CD8-positive, alpha-beta T cell (primary cell): ENCODE measurements at regions of chr12 and their contacts with region 1.

Region 1: DNA sequence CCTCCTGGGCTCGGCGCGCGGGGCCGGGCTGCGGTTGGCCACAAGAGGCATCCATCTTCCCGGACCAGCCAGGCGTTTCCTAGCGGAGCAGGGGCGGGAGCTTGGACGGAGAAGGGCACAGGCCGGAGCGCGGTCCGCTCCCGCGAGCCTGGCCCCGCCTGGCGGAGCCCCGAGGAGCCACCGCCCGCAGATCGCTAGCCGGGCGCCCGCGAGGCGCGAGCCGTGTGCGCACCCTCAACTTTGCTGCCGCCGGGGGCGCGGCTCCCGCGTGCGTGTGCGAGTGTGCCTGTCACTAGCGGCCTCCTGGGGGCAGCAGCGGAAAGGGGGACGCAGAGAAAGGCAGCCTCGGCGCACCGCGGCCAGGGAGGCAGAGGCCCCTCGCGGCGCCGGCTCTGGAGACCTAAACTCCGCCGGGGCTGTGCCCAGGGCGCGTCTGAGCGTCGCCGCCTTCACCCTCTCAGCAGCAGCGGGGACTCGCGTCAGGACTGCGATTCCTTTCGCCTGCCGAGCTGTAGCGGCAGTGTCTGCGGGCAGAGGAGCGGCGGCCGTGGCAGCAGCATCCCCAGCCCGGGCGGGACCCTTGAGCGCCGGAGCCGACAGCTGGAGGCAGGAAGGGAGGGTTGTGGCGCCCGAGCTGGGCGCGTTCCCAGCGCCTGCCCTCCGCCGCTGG is 644 bp upstream of the SRGAP1 start:
- DNase-seq: peak; percentile 61 to 91 (median 78)
- ATAC-seq: peak; percentile 94
- H3K4me3 ChIP-seq: peak overlapping the region; percentile 49 to 69
- H3K4me3 Mint-ChIP-seq: peak overlapping the region; percentile 76
- H3K27ac ChIP-seq: no peak overlapping the region
- H3K27ac Mint-ChIP-seq: no peak overlapping the region
- H3K4me1 ChIP-seq: peaks cover 7% of the 10 kb centered on the region
- H3K4me1 Mint-ChIP-seq: peaks cover 10% of the 10 kb centered on the region
- H3K27me3 ChIP-seq: peaks cover 0 to 13% of the 10 kb centered on the region in 2 experiments
- H3K27me3 Mint-ChIP-seq: peaks cover 32% of the 10 kb centered on the region
- CTCF ChIP-seq: peak; percentile 78

Region 2: GRCh38 chr12:63766498-63766897 is 77.4 kb before region 1 on chr12:
- CTCF ChIA-PET with region 1: no interaction called
- POLR2A ChIA-PET with region 1: no interaction called
- intact Hi-C with region 1: no loop called
- DNase-seq: no peak
- ATAC-seq: no peak
- H3K4me3 ChIP-seq: no peak overlapping the region
- H3K4me3 Mint-ChIP-seq: no peak overlapping the region
- H3K27ac ChIP-seq: no peak overlapping the region
- H3K27ac Mint-ChIP-seq: no peak overlapping the region
- H3K4me1 ChIP-seq: no peaks in the 10 kb centered on the region
- H3K4me1 Mint-ChIP-seq: no peaks in the 10 kb centered on the region
- H3K27me3 ChIP-seq: peaks cover 0 to 3% of the 10 kb centered on the region in 2 experiments
- H3K27me3 Mint-ChIP-seq: peaks cover 21% of the 10 kb centered on the region
- CTCF ChIP-seq: no peak

Region 3: GRCh38 chr12:63882844-63883243 is 39.0 kb after region 1 on chr12:
- CTCF ChIA-PET with region 1: no interaction called
- POLR2A ChIA-PET with region 1: no interaction called
- intact Hi-C with region 1: no loop called
- DNase-seq: no peak
- ATAC-seq: no peak
- H3K4me3 ChIP-seq: no peak overlapping the region
- H3K4me3 Mint-ChIP-seq: no peak overlapping the region
- H3K27ac ChIP-seq: no peak overlapping the region
- H3K27ac Mint-ChIP-seq: no peak overlapping the region
- H3K4me1 ChIP-seq: no peaks in the 10 kb centered on the region
- H3K4me1 Mint-ChIP-seq: no peaks in the 10 kb centered on the region
- H3K27me3 ChIP-seq: no peaks in the 10 kb centered on the region
- H3K27me3 Mint-ChIP-seq: peaks cover 9% of the 10 kb centered on the region
- CTCF ChIP-seq: no peak

Region 4: GRCh38 chr12:64192644-64193444 is 349.0 kb after region 1 on chr12:
- CTCF ChIA-PET with region 1: no interaction called
- POLR2A ChIA-PET with region 1: no interaction called
- intact Hi-C with region 1: no loop called
- DNase-seq: no peak
- ATAC-seq: no peak
- H3K4me3 ChIP-seq: no peak overlapping the region
- H3K4me3 Mint-ChIP-seq: no peak overlapping the region
- H3K27ac ChIP-seq: no peak overlapping the region
- H3K27ac Mint-ChIP-seq: no peak overlapping the region
- H3K4me1 ChIP-seq: no peaks in the 10 kb centered on the region
- H3K4me1 Mint-ChIP-seq: peaks cover 2% of the 10 kb centered on the region
- H3K27me3 ChIP-seq: no peaks in the 10 kb centered on the region
- H3K27me3 Mint-ChIP-seq: no peaks in the 10 kb centered on the region
- CTCF ChIP-seq: no peak

Region 5: GRCh38 chr12:64392221-64392620 is 548.4 kb after region 1 on chr12:
- CTCF ChIA-PET with region 1: no interaction called
- POLR2A ChIA-PET with region 1: no interaction called
- intact Hi-C with region 1: loop called in 1 of 2 experiments (anchors 5 kb)
- DNase-seq: peak in 2 of 9 experiments; percentile 38 to 52
- ATAC-seq: peak; percentile 48
- H3K4me3 ChIP-seq: no peak overlapping the region
- H3K4me3 Mint-ChIP-seq: peak overlapping the region; percentile 18
- H3K27ac ChIP-seq: no peak overlapping the region
- H3K27ac Mint-ChIP-seq: no peak overlapping the region
- H3K4me1 ChIP-seq: peaks cover 4% of the 10 kb centered on the region
- H3K4me1 Mint-ChIP-seq: peaks cover 5% of the 10 kb centered on the region
- H3K27me3 ChIP-seq: peaks cover 0 to 5% of the 10 kb centered on the region in 2 experiments
- H3K27me3 Mint-ChIP-seq: peaks cover 9% of the 10 kb centered on the region
- CTCF ChIP-seq: peak; percentile 28